Activated B cell treated with CpG ODN at 0.5 μM for 24 hours (primary cell): ENCODE measurements at regions of chr2 and their contacts with region 1.

Region 1: DNA sequence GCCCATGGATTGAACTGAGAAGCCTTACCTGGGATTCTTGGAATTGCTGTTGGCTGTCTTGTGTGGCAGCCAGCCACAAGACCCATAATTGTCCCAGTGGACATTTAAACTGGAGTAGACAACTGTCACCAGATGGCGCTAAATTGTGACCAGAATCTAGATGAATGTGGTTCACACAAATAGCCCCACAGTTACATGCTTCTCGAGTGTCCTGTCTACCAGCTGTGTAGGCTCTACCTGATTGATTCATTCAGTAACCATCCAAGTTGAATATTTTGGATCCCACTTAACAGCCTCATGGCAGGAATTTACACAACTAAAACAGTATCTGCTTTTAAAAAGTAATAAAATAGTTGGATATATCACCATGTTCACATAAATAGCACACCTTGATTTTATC is 73.2 kb downstream of the MAP4K4 start:
- DNase-seq: no peak
- ATAC-seq: peak; percentile 44
- H3K4me3 Mint-ChIP-seq: no peak overlapping the region
- H3K27ac Mint-ChIP-seq: peak overlapping the region; percentile 12
- H3K4me1 Mint-ChIP-seq: peaks cover 95% of the 10 kb centered on the region
- H3K27me3 Mint-ChIP-seq: no peaks in the 10 kb centered on the region
- CTCF ChIP-seq: peak; percentile 0

Region 2: DNA sequence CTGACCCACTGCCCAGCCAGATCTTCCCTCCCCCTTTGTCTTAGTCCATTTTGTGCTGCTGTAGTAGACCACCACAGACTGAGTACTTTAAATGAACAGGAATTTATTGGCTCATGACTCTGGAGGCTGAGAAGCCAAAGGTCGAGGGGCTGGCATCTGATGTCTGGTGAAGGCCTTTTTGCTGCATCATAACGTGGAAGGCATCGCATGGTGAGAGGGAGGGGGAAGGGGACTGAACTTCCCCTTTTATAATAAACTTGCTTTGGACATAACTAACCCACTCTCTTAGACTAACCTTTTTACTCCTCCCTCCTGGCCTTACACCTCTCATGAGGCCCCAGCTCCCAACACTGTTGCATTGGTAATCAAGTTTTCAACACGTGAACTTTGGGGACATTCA is 10.6 kb after region 1 on chr2:
- CTCF ChIA-PET with region 1: interaction called, 5 read pairs
- POLR2A ChIA-PET with region 1: interaction called, 5 read pairs
- intact Hi-C with region 1: loop called (anchors 1 kb)
- DNase-seq: no peak
- ATAC-seq: peak; percentile 89
- H3K4me3 Mint-ChIP-seq: peak overlapping the region; percentile 69
- H3K27ac Mint-ChIP-seq: peak overlapping the region; percentile 87
- H3K4me1 Mint-ChIP-seq: peaks cover 95% of the 10 kb centered on the region
- H3K27me3 Mint-ChIP-seq: no peaks in the 10 kb centered on the region
- CTCF ChIP-seq: no peak

Region 3: GRCh38 chr2:101806123-101806522 is 35.4 kb after region 1 on chr2:
- CTCF ChIA-PET with region 1: no interaction called
- POLR2A ChIA-PET with region 1: no interaction called
- intact Hi-C with region 1: loop called (anchors 5 kb)
- DNase-seq: peak; percentile 43
- ATAC-seq: peak; percentile 88
- H3K4me3 Mint-ChIP-seq: peak overlapping the region; percentile 66
- H3K27ac Mint-ChIP-seq: peak overlapping the region; percentile 75
- H3K4me1 Mint-ChIP-seq: peaks cover 79% of the 10 kb centered on the region
- H3K27me3 Mint-ChIP-seq: no peaks in the 10 kb centered on the region
- CTCF ChIP-seq: no peak

Region 4: DNA sequence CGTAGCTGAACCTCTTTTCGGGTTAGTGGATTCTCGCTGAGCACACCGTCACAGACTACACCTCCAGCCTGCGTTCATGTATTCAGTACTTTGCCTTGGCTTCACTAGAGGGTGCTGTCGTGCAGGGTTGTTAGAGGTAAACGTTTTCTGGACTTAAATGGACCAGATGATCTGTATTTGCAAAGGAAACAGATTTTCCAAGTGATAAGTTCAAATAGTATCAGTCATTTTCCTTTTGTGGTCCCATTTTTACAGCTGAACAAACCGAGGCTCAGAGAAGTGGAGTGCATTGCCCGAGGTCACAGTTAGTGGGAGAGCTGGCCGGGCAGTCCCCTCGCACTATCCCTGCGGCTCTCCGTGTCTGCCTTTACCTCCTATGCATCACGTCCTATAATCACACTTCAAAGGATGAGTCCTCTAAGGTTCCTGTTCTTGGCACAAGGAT is 52.6 kb after region 1 on chr2:
- CTCF ChIA-PET with region 1: interaction called, 14 read pairs
- POLR2A ChIA-PET with region 1: no interaction called
- intact Hi-C with region 1: loop called (anchors 5 kb)
- DNase-seq: no peak
- ATAC-seq: peak; percentile 86
- H3K4me3 Mint-ChIP-seq: no peak overlapping the region
- H3K27ac Mint-ChIP-seq: peak overlapping the region; percentile 57
- H3K4me1 Mint-ChIP-seq: peaks cover 68% of the 10 kb centered on the region
- H3K27me3 Mint-ChIP-seq: no peaks in the 10 kb centered on the region
- CTCF ChIP-seq: no peak

Region 5: GRCh38 chr2:101831351-101831865 is 60.7 kb after region 1 on chr2:
- CTCF ChIA-PET with region 1: interaction called, 4 read pairs
- POLR2A ChIA-PET with region 1: no interaction called
- intact Hi-C with region 1: loop called (anchors 2 kb)
- DNase-seq: peak; percentile 37
- ATAC-seq: peak; percentile 82
- H3K4me3 Mint-ChIP-seq: no peak overlapping the region
- H3K27ac Mint-ChIP-seq: peak overlapping the region; percentile 56
- H3K4me1 Mint-ChIP-seq: peaks cover 49% of the 10 kb centered on the region
- H3K27me3 Mint-ChIP-seq: no peaks in the 10 kb centered on the region
- CTCF ChIP-seq: no peak

Region 6: GRCh38 chr2:102050854-102051391 is 280.2 kb after region 1 on chr2:
- CTCF ChIA-PET with region 1: no interaction called
- POLR2A ChIA-PET with region 1: no interaction called
- intact Hi-C with region 1: no loop called
- DNase-seq: no peak
- ATAC-seq: no peak
- H3K4me3 Mint-ChIP-seq: no peak overlapping the region
- H3K27ac Mint-ChIP-seq: no peak overlapping the region
- H3K4me1 Mint-ChIP-seq: no peaks in the 10 kb centered on the region
- H3K27me3 Mint-ChIP-seq: peaks cover 21% of the 10 kb centered on the region
- CTCF ChIP-seq: no peak